ENCODE measurements at regions of chr9 and their contacts with region 1.

Region 1: GRCh38 chr9:15416880-15417279 is 5.8 kb upstream of the SNAPC3 start:
- DNase-seq: no peak
- H3K4me3 ChIP-seq: no peak overlapping the region
- CTCF ChIP-seq: peak; percentile 34

Region 2: DNA sequence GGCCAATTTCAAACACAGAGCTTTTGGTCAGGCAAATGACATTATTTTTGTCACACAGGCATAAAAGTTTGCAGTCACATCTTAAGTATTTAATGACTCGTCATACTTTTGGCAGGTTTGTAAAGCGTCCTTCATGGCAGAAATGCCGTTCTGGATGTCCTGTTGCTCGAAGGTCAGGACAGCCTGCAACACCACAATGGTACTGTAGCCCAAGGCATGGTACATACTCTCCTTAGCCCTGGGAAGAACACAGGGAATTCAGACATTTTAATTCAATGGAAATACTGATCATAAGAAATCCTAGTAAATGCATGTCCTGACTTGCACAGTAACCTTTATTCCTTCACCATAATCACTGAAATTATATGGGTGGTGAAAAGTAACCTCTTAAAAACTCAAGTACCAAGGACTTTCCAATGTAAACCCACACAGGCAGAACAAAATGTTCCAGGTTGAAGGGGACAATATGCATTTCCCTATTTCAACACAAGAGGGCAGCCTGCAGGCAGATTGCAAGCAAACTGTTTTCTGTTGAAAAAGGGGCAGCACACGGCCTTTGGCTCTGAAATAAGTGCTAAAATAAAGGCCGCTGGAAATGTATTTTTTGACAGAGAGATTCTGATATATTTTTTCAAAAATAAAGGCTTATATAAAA is 205.6 kb before region 1 on chr9:
- CTCF ChIA-PET with region 1: interaction called, 81 read pairs
- POLR2A ChIA-PET with region 1: no interaction called
- DNase-seq: no peak
- H3K4me3 ChIP-seq: no peak overlapping the region
- CTCF ChIP-seq: peak; percentile 81

Region 3: GRCh38 chr9:15277400-15278090 is 139.3 kb before region 1 on chr9:
- CTCF ChIA-PET with region 1: interaction called, 16 read pairs
- POLR2A ChIA-PET with region 1: no interaction called
- DNase-seq: no peak
- H3K4me3 ChIP-seq: no peak overlapping the region
- CTCF ChIP-seq: no peak

Region 4: DNA sequence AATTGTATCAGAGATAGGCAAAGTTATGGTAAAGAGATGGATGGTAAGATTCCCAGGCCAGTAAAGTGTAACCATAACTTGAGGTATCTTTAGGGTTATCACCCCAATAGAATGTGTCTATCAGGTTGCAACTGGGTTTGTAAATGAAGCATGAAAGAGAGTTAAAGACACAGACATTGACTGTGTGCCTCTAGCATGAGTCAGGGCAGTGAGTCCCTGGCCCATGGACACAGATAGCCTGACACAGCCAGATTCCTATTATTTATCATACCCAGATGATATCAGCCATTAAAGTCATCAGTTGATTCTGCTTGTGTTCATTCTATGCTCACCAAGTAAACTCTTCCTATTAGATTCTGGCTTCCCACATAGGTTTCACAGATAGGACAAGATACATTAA is 27.7 kb before region 1 on chr9:
- CTCF ChIA-PET with region 1: no interaction called
- POLR2A ChIA-PET with region 1: no interaction called
- DNase-seq: no peak
- H3K4me3 ChIP-seq: no peak overlapping the region
- CTCF ChIP-seq: no peak